Common myeloid progenitor, CD34-positive (primary cell): ENCODE measurements at regions of chr10 and their contacts with region 1.

Region 1: GRCh38 chr10:125982260-125982948 is 86.0 kb downstream of the FANK1 start:
- DNase-seq: peak; percentile 80 to 90 (median 89)
- H3K4me3 ChIP-seq: no peak overlapping the region
- H3K27ac ChIP-seq: no peak overlapping the region
- H3K4me1 ChIP-seq: peaks cover 2 to 13% (median 3%) of the 10 kb centered on the region in 4 experiments
- H3K27me3 ChIP-seq: no peaks in the 10 kb centered on the region

Region 2: DNA sequence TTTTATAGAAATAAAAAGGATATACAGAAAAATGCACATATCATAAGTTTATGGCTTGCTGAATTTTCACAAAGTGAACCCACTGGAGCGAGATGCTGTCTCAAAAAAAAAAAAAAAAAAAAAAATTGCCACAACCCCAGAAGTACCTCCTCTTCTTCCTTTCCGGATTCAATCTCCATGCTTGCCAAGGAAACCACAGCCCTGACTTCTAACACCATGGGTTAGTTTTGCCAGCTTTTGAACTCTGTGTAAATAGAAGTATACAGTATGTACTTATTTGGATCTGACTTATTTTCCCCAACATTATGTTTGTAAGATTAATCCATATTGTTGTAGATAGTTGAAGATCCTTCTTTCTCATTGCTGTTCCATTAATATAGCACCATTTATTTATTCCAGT is 46.1 kb before region 1 on chr10:
- CTCF ChIA-PET with region 1: interaction called, 14 read pairs
- POLR2A ChIA-PET with region 1: no interaction called
- DNase-seq: peak; percentile 12 to 58 (median 54)
- H3K4me3 ChIP-seq: no peak overlapping the region
- H3K27ac ChIP-seq: no peak overlapping the region
- H3K4me1 ChIP-seq: peaks cover 0 to 4% (median 0%) of the 10 kb centered on the region in 4 experiments
- H3K27me3 ChIP-seq: peaks cover 0 to 9% (median 1%) of the 10 kb centered on the region in 5 experiments

Region 3: DNA sequence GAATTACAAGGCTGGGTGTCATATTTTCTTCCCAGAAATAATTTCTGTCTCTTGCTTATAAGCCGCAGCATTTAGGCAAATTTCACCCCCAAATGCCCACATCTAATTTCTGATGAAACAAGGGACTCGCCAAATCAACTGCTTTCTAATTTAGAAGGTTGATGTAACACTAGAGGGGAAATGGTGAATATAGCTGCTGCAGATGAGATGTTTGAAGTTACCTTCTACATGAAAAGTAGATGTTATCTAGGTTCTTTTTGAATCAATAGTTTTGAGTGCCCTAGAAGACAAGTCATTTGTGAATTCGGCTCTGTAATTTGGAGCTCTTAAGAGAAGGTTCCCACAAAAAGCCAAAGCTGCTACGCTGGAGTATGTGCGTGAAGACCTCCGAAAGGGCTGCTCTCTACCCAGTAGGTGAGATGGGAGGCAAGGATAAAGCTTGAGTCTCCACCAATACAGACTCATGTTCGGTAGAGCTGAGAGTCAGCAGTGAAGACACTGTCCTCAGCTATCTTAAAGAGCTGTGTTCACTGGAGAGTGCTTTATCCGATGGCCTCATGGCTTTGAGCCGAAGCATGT is 13.4 kb after region 1 on chr10:
- CTCF ChIA-PET with region 1: interaction called, 15 read pairs
- POLR2A ChIA-PET with region 1: no interaction called
- DNase-seq: no peak
- H3K4me3 ChIP-seq: no peak overlapping the region
- H3K27ac ChIP-seq: no peak overlapping the region
- H3K4me1 ChIP-seq: peaks cover 0 to 2% (median 0%) of the 10 kb centered on the region in 4 experiments
- H3K27me3 ChIP-seq: no peaks in the 10 kb centered on the region

Region 4: DNA sequence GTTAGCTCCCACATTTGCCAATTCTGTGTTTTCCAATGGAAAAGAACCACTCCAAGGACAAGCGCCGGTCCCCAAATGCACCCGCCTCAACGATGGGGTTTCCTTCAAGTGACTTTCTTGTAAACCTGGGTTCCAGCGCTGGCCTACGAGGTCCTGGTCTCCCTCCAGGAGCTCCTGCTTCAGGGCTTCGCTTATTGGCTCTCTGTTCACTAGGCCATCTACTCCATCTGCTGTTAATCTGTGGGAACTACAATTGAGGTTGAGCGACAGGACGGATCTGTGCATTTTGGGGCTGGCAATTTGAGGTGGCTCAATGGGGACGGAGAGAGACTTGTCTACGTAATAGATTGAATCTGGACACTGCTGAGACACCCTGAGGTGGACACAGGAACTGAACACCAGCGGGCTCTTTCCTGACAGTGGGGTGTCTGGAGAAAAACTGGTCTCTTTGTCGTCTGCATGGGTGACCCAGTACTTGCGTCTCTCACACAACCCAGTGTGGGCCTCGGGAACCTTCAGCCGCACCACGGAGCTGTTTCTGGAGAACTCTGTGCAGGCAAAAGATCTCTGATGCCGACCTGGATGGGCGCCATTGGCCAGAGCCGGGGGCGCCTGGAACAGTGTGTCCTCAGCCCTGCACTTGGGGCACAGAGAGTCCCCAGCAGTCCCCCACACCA is 521.8 kb after region 1 on chr10:
- CTCF ChIA-PET with region 1: interaction called, 28 read pairs
- POLR2A ChIA-PET with region 1: no interaction called
- DNase-seq: peak; percentile 59 to 70 (median 63)
- H3K4me3 ChIP-seq: no peak overlapping the region
- H3K27ac ChIP-seq: no peak overlapping the region
- H3K4me1 ChIP-seq: no peaks in the 10 kb centered on the region
- H3K27me3 ChIP-seq: no peaks in the 10 kb centered on the region